ENCODE measurements at regions of chr14 and their contacts with region 1.

Region 1: DNA sequence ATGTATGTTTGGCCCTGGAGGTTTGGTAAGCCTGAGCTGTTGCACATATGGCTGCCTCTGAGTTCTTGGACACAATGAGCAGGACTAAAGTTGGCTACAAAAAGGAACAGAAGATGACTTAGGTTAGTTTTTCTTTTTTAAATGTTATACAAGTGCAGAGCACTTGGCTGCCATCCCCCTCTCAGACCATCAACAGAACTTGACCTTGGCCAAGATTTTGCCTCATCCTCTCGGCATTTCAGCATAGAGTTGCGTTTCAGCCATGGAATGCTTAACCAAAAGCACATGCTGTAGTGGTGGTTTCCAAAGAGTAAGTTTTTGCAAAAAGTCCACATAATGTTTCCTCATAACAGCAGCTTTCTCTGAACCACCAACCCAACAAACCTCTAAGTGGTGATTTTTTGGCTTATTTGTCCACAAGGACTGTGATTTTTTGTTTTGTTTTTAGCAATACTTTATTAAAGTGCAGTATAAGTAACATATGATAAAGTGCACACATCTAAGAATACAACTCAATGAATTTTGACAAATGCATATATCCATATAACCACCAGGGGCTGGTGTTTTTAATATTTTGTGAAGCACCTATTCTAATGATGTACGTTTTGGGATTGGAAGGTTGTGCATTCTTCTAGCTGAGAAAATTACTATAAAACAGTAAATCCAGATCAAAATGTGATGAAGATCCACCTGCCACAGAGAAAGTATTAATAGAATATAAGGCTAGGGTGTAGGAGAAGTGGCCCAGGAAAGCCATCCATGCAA is 12.1 kb upstream of the GALNT16 start:
- DNase-seq: no peak
- ATAC-seq: peak; percentile 67
- H3K4me3 ChIP-seq: no peak overlapping the region
- H3K27ac ChIP-seq: peak overlapping the region in 1 of 2 donors; percentile 9
- H3K4me1 ChIP-seq: peaks cover 0 to 8% of the 10 kb centered on the region in 2 donors
- H3K27me3 ChIP-seq: no peaks in the 10 kb centered on the region

Region 2: DNA sequence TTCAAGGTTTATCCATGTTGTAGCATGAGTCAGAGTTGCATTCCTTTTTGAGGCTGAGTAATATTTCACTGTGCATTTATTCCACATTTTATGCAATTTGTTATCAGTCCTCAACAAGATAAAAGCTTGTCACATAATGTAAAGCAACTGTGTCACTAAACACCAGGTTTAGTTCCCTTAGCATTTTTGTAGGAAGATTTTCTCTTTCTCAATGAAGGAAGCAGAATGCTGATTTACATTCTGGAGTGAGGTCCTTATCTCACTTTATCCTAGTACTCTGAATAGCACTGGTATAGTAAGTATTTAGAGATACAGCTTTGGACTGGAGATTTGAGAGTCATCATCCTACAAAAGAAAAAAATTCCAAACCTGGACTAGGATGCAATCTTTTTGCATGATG is 66.4 kb before region 1 on chr14:
- intact Hi-C with region 1: no loop called
- DNase-seq: no peak
- ATAC-seq: no peak
- H3K4me3 ChIP-seq: no peak overlapping the region
- H3K27ac ChIP-seq: no peak overlapping the region
- H3K4me1 ChIP-seq: no peaks in the 10 kb centered on the region
- H3K27me3 ChIP-seq: no peaks in the 10 kb centered on the region

Region 3: DNA sequence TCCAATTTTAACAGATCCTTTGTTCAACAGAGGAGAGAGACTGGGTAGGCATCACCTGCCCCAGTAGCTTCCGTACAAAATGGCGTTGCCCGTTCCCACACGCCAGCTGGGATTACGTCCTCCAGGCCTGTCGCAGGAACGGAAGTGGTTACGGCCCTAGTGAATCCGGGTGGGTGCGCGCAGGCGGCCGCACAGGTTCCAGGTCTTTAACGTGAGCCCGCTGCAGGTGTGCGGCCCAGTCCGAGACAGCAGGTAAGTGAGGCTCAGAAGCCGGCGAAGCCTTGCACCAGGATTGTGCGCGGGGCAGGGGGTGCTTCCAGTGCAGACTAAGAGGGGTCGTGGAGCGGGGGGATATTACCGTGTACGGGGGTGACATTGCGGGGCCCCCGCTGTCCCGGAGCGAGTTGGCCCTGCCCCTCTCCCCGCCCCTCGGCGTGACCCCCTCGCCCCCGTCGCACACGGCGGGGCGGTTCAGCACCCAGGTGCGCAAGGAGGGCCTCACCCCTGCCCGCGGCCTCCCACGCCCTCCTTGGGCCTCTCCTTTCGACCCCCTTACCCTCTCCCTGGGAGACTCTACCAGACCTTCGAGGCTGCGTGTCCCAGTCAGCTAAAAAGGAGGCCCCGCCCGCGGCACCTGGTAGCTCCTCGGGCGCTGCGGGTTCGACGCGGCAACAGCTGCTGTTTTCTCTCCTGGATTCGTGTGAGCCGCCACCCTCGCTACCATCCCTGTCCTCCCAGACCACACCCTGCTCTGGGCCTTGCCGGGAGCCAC is 56.3 kb before region 1 on chr14 and contains the start of gene EXD2:
- intact Hi-C with region 1: no loop called
- DNase-seq: peak; percentile 90 to 91
- ATAC-seq: peak; percentile 95
- H3K4me3 ChIP-seq: peak within 1 kb of the TSS; percentile 30 to 51
- H3K27ac ChIP-seq: no peak within 1 kb of the TSS
- H3K4me1 ChIP-seq: no peaks in the 10 kb centered on the region
- H3K27me3 ChIP-seq: no peaks in the 10 kb centered on the region
- total RNA-seq, gene EXD2: 13.1 to 19.4 TPM

Region 4: DNA sequence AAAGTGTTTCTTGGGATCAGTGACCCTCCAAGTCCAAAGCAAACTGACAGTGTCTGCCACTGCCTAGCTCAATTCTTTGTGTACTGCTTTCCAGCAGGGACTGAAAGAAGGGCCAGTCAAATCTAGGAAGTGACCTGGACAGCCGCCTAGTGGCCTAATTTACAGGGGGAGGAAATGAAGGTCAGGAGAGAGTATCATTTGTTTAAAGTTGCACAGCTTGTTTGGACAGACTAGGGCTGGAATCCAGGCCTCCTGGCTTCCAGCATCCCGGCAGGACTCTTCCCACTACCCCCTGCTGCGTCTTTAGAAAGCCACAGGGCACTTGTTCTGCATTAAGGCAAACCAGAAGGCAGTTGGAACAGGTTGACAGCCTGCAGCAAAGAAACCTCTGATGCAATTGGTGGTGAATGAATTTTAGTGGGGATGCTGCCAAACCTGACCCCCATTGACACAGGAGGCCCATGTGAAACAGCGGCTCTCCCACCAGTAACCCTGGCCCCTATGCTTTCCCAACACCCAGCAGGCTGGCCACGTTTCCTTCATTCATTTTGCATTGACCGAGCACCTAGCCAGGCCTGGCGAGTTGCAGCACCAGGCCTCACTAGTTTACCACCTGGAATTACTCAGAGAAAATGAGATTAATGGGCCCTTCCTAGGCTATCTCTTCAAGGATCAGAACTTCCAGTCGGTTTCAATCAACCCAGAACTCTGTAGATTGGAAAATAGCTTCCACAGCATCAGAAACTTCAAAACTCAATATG is 40.3 kb after region 1 on chr14:
- intact Hi-C with region 1: loop called (anchors 5 kb)
- DNase-seq: no peak
- ATAC-seq: peak; percentile 37
- H3K4me3 ChIP-seq: no peak overlapping the region
- H3K27ac ChIP-seq: no peak overlapping the region
- H3K4me1 ChIP-seq: no peaks in the 10 kb centered on the region
- H3K27me3 ChIP-seq: no peaks in the 10 kb centered on the region